ENCODE measurements at regions of chr12 and their contacts with region 1.

Region 1: DNA sequence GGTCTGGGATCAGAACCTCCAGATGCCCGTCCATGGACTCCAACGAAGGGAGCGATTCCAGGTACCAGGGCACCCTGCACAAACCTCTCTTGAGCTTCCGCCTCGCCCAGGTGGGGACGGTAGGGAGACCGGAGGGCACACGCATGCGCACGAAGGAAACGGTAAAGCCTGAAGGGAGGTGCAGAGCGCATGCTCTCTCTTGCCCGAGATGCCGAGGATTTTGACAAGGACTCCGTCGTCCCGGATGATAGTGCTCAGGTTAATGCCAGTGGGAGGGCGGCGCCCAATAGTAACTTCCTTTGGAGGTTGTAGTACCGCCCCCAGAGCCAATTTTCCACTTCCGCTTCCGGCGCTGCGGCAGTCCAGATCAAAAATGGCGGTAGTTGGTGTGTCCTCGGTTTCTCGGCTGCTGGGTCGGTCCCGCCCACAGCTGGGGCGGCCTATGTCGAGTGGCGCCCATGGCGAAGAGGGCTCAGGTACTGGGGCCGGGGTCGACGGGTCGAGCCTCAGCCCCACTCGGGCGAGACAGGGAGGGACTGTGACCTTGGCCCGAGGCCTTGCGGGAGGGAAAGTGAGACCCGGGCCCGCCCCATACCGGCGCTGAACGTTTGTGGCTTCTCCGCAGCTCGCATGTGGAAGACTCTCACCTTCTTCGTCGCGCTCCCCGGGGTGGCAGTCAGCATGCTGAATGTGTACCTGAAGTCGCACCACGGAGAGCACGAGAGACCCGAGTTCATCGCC is at the start of gene COX6A1:
- DNase-seq: peak; percentile 100
- H3K4me3 ChIP-seq: peak within 1 kb of the TSS; percentile 91
- H3K27ac ChIP-seq: peak within 1 kb of the TSS; percentile 69
- H3K4me1 ChIP-seq: peaks cover 23% of the 10 kb centered on the region
- CTCF ChIP-seq: peak; percentile 21; the same call in 1 of the 2 replicates
- total RNA-seq, gene COX6A1: 543 and 591 TPM in 2 replicates

Region 2: DNA sequence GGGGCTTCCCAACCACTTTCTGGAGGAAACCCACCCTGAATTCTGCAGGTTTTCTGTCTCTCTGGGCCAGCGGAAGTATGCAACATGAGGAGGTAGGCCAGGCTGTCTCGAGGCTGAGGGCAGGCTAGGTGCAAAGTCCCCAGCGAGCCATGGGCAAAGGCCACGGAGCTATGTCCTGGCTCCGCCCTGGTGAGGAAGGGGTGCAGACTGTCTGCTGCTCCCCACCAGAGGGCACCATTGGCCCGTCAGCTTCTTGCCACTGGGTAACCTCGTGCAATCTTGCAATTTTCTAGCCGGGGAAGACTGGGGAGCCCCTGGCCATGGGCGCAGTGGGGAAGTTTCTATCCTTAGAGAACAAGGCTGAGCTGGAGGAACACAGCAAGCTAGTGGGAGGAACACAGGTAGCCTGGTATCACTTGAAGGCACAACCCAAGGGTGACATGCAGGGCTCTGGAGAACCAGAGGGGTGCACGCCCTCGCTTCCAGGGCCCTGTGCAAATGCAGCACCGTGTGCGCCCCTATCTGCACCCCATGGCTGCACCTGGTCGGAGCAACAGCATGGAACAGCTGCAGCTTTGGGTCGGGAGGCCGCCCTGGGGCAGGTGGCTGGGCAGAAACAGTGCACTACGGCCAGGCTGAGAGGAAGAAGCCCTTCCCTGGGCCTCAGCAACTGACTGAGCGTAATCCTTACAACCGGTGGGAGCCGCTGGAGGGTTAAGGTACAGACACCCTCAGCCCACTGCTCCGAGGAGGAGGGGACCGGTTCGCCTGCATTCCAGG is 209.4 kb before region 1 on chr12:
- CTCF ChIA-PET with region 1: interaction called, 5 read pairs
- POLR2A ChIA-PET with region 1: no interaction called
- intact Hi-C with region 1: loop called (anchors 10 kb)
- DNase-seq: peak; percentile 91
- H3K4me3 ChIP-seq: peak overlapping the region; percentile 43
- H3K27ac ChIP-seq: peak overlapping the region; percentile 69
- H3K4me1 ChIP-seq: peaks cover 57% of the 10 kb centered on the region
- CTCF ChIP-seq: peak; percentile 95

Region 3: GRCh38 chr12:120249875-120250795 is 187.8 kb before region 1 on chr12:
- CTCF ChIA-PET with region 1: no interaction called
- POLR2A ChIA-PET with region 1: no interaction called
- intact Hi-C with region 1: no loop called
- DNase-seq: no peak
- H3K4me3 ChIP-seq: no peak overlapping the region
- H3K27ac ChIP-seq: no peak overlapping the region
- H3K4me1 ChIP-seq: peaks cover 8% of the 10 kb centered on the region
- CTCF ChIP-seq: no peak

Region 4: GRCh38 chr12:120317224-120318105 is 120.5 kb before region 1 on chr12:
- CTCF ChIA-PET with region 1: no interaction called
- POLR2A ChIA-PET with region 1: interaction called, 3 read pairs
- intact Hi-C with region 1: loop called (anchors 5 kb)
- DNase-seq: peak; percentile 100
- H3K4me3 ChIP-seq: peak overlapping the region; percentile 69
- H3K27ac ChIP-seq: no peak overlapping the region
- H3K4me1 ChIP-seq: peaks cover 10% of the 10 kb centered on the region
- CTCF ChIP-seq: peak; percentile 79

Region 5: GRCh38 chr12:120469450-120470149 is 31.7 kb after region 1 on chr12 and contains the start of gene SRSF9:
- CTCF ChIA-PET with region 1: interaction called, 3 read pairs
- POLR2A ChIA-PET with region 1: interaction called, 5 read pairs
- intact Hi-C with region 1: loop called (anchors 2 kb)
- DNase-seq: peak; percentile 98
- H3K4me3 ChIP-seq: peak within 1 kb of the TSS; percentile 98
- H3K27ac ChIP-seq: peak within 1 kb of the TSS; percentile 69
- H3K4me1 ChIP-seq: peaks cover 48% of the 10 kb centered on the region
- CTCF ChIP-seq: peak; percentile 84
- total RNA-seq, gene SRSF9: 181 and 203 TPM in 2 replicates

Region 6: GRCh38 chr12:120495723-120496412 is 57.9 kb after region 1 on chr12 and contains the start of gene DYNLL1:
- CTCF ChIA-PET with region 1: no interaction called
- POLR2A ChIA-PET with region 1: interaction called, 3 read pairs
- intact Hi-C with region 1: loop called (anchors 2 kb)
- DNase-seq: peak; percentile 98
- H3K4me3 ChIP-seq: peak within 1 kb of the TSS; percentile 79
- H3K27ac ChIP-seq: peak within 1 kb of the TSS; percentile 71
- H3K4me1 ChIP-seq: peaks cover 23% of the 10 kb centered on the region
- CTCF ChIP-seq: no peak
- total RNA-seq, gene DYNLL1: 354 and 400 TPM in 2 replicates

Region 7: GRCh38 chr12:120534703-120535655 is 97.1 kb after region 1 on chr12:
- CTCF ChIA-PET with region 1: no interaction called
- POLR2A ChIA-PET with region 1: no interaction called
- intact Hi-C with region 1: loop called (anchors 5 kb)
- DNase-seq: peak; percentile 69
- H3K4me3 ChIP-seq: peak overlapping the region; percentile 89
- H3K27ac ChIP-seq: peak overlapping the region; percentile 65
- H3K4me1 ChIP-seq: peaks cover 60% of the 10 kb centered on the region
- CTCF ChIP-seq: peak; percentile 17; the same call in 1 of the 2 replicates

Region 8: GRCh38 chr12:120725659-120726509 is 288.0 kb after region 1 on chr12 and contains the start of gene ACADS:
- CTCF ChIA-PET with region 1: no interaction called
- POLR2A ChIA-PET with region 1: no interaction called
- intact Hi-C with region 1: loop called (anchors 10 kb)
- DNase-seq: peak; percentile 90
- H3K4me3 ChIP-seq: peak within 1 kb of the TSS; percentile 64
- H3K27ac ChIP-seq: no peak within 1 kb of the TSS
- H3K4me1 ChIP-seq: peaks cover 33% of the 10 kb centered on the region
- CTCF ChIP-seq: no peak
- total RNA-seq, gene ACADS: 7.7 and 8.8 TPM in 2 replicates